Aorta (tissue), 5 donors: ENCODE measurements at regions of chr6 and their contacts with region 1.

Region 1: DNA sequence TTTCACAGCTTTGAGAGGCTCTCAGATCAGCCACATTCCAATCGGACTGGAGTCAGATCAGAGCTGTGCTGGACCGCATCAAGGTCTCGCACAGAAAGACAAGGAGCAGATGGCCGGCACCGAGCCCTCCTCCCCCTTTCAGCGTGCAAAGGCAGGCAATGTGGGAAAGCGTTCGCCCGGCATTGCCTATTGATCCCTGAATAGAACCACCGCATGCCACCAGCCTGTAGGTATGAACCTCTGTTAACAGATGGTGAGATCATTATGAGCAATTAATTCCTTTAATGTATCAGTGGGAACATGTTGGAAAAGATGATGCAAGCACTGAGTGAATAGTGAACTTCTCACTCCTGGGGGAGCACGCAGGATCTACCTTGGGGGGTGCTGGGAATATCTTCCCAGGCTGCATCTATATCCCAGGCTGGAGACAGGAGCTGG is 117.5 kb upstream of the ID4 start:
- DNase-seq: no peak
- ATAC-seq: no peak
- H3K4me3 ChIP-seq: no peak overlapping the region
- H3K27ac ChIP-seq: peak overlapping the region; percentile 24 to 55
- H3K4me1 ChIP-seq: peaks cover 0 to 8% of the 10 kb centered on the region in 2 donors
- H3K27me3 ChIP-seq: no peaks in the 10 kb centered on the region

Region 2: DNA sequence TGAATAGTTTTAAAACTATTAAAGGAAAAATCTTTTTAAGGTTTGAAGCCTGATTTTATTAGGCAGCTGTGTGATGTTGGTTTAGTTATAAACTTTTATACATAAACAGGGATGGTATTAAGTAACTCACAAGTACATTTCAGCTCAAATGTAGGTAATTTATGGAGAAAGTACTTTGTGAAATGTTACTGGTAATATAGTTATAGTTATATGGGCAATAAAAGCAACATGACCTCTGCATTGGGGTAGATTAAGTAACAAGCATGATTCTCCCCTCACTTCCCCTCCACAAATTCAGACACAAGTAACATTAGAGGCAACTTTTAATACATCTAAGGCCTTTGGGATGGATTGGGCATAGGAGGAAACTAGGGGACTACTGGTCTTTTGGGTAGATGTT is 36.9 kb before region 1 on chr6:
- intact Hi-C with region 1: no loop called
- DNase-seq: no peak
- ATAC-seq: no peak
- H3K4me3 ChIP-seq: no peak overlapping the region
- H3K27ac ChIP-seq: no peak overlapping the region
- H3K4me1 ChIP-seq: no peaks in the 10 kb centered on the region
- H3K27me3 ChIP-seq: no peaks in the 10 kb centered on the region

Region 3: GRCh38 chr6:19789100-19789805 is 69.5 kb after region 1 on chr6:
- intact Hi-C with region 1: loop called (anchors 5 to 10 kb)
- DNase-seq: no peak
- ATAC-seq: no peak
- H3K4me3 ChIP-seq: peak overlapping the region; percentile 16 to 48
- H3K27ac ChIP-seq: peak overlapping the region; percentile 59 to 76
- H3K4me1 ChIP-seq: peaks cover 0 to 5% of the 10 kb centered on the region in 2 donors
- H3K27me3 ChIP-seq: no peaks in the 10 kb centered on the region

Region 4: GRCh38 chr6:19795211-19795610 is 75.5 kb after region 1 on chr6:
- intact Hi-C with region 1: loop called in 1 of 2 experiments (anchors 10 kb)
- DNase-seq: no peak
- ATAC-seq: no peak
- H3K4me3 ChIP-seq: no peak overlapping the region
- H3K27ac ChIP-seq: no peak overlapping the region
- H3K4me1 ChIP-seq: peaks cover 0 to 1% of the 10 kb centered on the region in 2 donors
- H3K27me3 ChIP-seq: no peaks in the 10 kb centered on the region